Esophagus muscularis mucosa (tissue), 4 donors: ENCODE measurements at regions of chr3 and their contacts with region 1.

Region 1: DNA sequence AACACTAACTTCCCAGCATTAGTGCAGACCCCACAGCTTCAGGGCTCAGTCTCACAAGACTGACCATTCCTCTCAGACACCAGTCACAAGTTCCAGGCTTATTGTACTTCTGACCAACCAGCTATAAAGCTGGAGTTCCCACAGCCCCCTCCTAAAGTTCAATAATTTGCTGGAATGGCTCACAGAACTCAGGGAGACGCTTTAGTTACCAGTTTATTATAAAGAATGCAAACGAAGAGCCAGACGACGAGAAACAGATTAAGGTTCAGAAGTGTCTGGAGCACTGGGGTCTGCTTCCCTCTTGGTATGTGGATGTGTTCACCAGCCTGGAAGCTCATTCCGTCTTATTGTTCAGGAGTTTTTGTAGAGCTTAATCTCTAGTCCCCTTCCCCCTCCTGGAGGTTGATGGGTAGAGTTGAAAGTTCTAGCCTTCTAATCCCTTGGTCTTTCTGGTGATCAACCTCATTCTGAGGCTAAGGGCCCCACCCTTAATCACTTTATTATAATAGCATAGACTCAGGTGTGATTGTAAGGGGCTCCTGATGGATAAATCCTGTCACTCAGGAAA is 4.8 kb upstream of the CSRNP1 start:
- DNase-seq: no peak
- H3K4me3 ChIP-seq: no peak overlapping the region
- H3K27ac ChIP-seq: no peak overlapping the region
- H3K4me1 ChIP-seq: peaks cover 11 to 14% (median 13%) of the 10 kb centered on the region in 4 donors
- H3K27me3 ChIP-seq: no peaks in the 10 kb centered on the region
- CTCF ChIP-seq: no peak
- EP300 ChIP-seq: no peak
- POLR2A ChIP-seq: no peak

Region 2: GRCh38 chr3:38334142-38335055 is 823.8 kb before region 1 on chr3:
- intact Hi-C with region 1: no loop called
- DNase-seq: peak; percentile 80
- H3K4me3 ChIP-seq: no peak overlapping the region
- H3K27ac ChIP-seq: no peak overlapping the region
- H3K4me1 ChIP-seq: no peaks in the 10 kb centered on the region
- H3K27me3 ChIP-seq: no peaks in the 10 kb centered on the region
- CTCF ChIP-seq: no peak
- EP300 ChIP-seq: no peak
- POLR2A ChIP-seq: no peak

Region 3: GRCh38 chr3:39174751-39175426 is 16.7 kb after region 1 on chr3:
- intact Hi-C with region 1: loop called (anchors 2 kb)
- DNase-seq: no peak
- H3K4me3 ChIP-seq: no peak overlapping the region
- H3K27ac ChIP-seq: peak overlapping the region; percentile 38 to 92 (median 67)
- H3K4me1 ChIP-seq: peaks cover 32 to 39% (median 33%) of the 10 kb centered on the region in 4 donors
- H3K27me3 ChIP-seq: no peaks in the 10 kb centered on the region
- CTCF ChIP-seq: no peak
- EP300 ChIP-seq: no peak
- POLR2A ChIP-seq: no peak

Region 4: DNA sequence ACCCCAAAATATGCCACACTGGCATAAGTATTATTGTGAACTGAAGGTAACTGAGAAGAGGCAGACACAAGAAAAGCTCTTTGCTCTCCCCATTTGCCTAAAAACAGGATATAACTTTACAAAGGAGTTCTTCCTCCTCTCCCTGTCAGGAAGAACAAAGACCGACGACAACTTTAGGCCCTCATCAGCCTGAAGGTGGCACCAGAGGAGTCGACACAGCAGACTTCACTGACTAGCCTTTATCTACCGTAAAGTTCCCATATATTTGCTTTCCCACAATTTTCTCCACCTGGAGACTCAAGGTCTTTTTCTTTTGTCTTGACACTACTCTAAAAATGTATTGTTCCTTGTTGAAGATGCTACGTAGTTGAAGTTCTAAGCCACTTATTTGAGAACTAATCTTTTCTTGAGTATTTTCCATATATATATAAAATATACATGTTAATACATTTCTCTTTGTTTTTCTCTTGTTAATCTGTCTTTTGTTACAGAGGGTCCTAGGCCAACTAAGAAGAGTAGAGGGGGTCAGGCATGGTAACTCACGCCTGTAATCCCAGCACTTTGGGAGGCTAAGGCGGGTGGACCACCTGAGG is 50.3 kb after region 1 on chr3:
- intact Hi-C with region 1: no loop called
- DNase-seq: peak; percentile 91
- H3K4me3 ChIP-seq: no peak overlapping the region
- H3K27ac ChIP-seq: no peak overlapping the region
- H3K4me1 ChIP-seq: peaks cover 0 to 9% (median 2%) of the 10 kb centered on the region in 4 donors
- H3K27me3 ChIP-seq: no peaks in the 10 kb centered on the region
- CTCF ChIP-seq: peak; percentile 57 to 66 (median 64)
- EP300 ChIP-seq: no peak
- POLR2A ChIP-seq: no peak

Region 5: GRCh38 chr3:40920041-40920440 is 1761.8 kb after region 1 on chr3:
- intact Hi-C with region 1: no loop called
- DNase-seq: no peak
- H3K4me3 ChIP-seq: no peak overlapping the region
- H3K27ac ChIP-seq: no peak overlapping the region
- H3K4me1 ChIP-seq: no peaks in the 10 kb centered on the region
- H3K27me3 ChIP-seq: no peaks in the 10 kb centered on the region
- CTCF ChIP-seq: no peak
- EP300 ChIP-seq: no peak
- POLR2A ChIP-seq: no peak